Activated B cell treated with CpG ODN at 0.5 μM for 24 hours (primary cell): ENCODE measurements at regions of chr6 and their contacts with region 1.

Region 1: DNA sequence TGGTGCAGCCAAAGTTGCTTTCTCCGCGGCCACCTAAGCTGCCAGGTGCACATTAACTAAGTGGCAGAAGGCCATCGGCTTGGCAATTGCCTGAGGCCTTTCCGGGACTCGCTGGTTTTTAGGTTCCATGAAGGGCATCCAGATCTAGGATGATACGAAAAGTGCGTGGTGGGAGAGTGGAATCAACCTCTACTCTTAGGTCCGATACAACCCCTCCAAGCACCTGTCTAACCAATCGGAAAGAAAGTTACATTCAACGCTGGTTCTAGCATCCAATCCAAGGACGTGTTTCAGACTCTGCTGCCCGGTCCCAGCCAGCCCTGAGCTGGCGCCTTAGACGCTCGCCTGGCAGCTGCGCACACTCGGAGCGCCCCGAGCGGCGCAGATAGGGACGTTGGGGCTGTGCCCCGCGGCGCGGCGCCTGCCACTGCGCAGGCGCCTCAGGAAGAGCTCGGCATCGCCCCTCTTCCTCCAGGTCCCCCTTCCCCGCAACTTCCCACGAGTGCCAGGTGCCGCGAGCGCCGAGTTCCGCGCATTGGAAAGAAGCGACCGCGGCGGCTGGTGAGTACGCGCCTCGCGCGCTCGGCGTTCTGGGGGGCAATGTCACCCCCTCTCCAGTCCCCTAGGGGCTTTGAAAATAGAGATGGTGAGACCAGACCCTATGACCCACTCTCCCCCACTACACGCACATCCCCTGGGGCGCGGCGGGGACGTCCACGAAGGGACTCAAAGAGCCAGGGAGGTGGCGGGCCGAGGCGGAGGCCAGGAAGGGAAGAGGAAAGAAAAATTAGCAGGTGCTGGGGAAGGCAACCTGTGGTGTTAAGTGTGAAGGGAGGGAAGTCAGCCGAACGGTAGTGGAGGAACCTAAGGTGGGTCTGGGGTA is at the start of gene ENPP4:
- DNase-seq: peak; percentile 76
- ATAC-seq: peak; percentile 99
- H3K4me3 Mint-ChIP-seq: peak within 1 kb of the TSS; percentile 95
- H3K27ac Mint-ChIP-seq: peak within 1 kb of the TSS; percentile 87
- H3K4me1 Mint-ChIP-seq: peaks cover 48% of the 10 kb centered on the region
- H3K27me3 Mint-ChIP-seq: no peaks in the 10 kb centered on the region
- CTCF ChIP-seq: no peak
- total RNA-seq, gene ENPP4: 13.0 and 13.6 TPM in 2 replicates

Region 2: DNA sequence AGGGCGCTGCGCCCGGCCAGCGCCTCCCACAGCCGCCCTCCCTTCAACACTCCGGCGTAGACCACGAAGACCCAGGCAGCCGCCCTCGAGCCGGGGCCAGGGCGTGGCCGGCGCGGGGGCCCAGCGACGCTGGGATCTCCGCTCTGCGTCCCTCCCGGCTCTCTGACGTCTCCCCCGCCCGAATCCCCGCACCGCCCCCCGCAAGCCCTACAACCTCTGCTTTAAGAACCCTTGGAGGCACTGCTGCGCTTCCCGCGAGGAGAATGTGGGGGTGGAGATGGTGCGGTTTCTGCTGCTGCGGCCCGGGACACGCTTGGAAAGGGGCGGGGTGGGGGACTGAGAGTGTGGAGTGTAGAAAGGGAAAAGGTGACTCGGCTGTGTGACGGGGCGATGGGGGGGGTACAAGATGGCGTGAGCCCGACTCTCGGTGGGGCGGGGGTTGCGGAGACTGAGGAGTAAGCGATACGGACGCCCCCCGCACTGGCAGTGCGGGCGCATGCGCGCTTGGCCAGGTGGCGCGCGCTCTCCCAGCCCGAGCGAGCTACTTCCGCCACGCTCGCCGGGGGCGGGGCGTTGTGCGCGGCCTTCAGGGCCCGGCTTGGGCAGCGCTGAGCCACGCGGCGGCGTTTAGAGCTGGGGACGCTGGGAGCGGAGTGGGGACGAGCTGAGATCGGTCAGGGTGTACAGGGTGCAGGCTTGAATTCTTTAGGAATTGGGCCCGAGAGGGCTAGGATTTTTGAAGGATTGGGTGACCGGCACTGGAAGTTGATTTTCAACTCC is 752.1 kb before region 1 on chr6 and contains the start of gene SUPT3H:
- CTCF ChIA-PET with region 1: no interaction called
- POLR2A ChIA-PET with region 1: interaction called, 7 read pairs
- intact Hi-C with region 1: loop called (anchors 2 kb)
- DNase-seq: peak; percentile 91
- ATAC-seq: peak; percentile 79
- H3K4me3 Mint-ChIP-seq: peak within 1 kb of the TSS; percentile 99
- H3K27ac Mint-ChIP-seq: peak within 1 kb of the TSS; percentile 99
- H3K4me1 Mint-ChIP-seq: peaks cover 26% of the 10 kb centered on the region
- H3K27me3 Mint-ChIP-seq: no peaks in the 10 kb centered on the region
- CTCF ChIP-seq: no peak
- total RNA-seq, gene SUPT3H: 9.9 and 10.4 TPM in 2 replicates

Region 3: DNA sequence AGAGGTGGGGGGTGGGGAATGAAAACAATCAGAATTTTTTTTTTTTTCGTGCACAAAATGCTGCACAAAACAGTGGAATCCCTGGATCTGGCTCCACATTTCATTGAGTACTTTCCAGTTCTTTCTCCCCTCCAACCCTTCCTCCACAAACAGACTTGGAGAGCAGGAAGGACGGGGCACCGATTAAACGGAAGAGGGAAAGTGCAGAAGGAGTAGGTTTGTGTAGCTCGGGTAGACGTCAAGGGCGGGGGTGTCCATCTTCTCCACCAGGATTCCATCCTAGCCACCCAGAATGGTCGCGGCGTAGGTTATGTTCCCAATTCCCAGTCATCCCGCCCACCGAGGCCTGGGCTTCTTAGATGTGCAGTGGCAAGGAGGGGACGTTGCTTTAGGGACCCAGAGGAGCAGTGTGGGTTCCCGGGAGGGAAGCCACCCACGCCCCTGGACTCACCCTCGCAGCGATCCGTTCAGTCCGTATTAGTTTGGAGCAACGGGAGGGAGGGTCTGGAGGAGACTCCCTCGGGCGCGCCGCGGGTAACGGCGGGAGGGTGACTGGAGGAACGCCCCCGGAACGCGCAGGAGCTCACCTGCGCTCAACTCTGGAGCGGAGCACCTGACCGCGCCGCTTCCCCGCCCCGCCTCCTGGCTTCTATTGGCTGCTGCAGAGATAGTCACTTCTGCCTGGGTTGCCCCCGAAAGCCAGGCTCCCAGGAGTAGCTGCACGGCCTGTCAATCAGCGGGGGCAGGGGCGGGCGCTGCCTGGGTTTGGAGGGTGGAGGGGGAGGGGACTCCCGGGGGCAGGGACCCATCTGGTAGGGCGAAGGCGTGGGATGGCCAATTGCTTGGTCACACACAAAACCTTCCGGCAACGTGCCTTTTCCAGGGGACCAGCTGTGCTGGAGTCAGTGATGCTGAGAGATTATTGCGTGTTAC is 40.8 kb after region 1 on chr6 and contains the start of gene ENPP5:
- CTCF ChIA-PET with region 1: interaction called, 3 read pairs
- POLR2A ChIA-PET with region 1: interaction called, 3 read pairs
- intact Hi-C with region 1: loop called (anchors 2 kb)
- DNase-seq: peak; percentile 58
- ATAC-seq: peak; percentile 98
- H3K4me3 Mint-ChIP-seq: peak within 1 kb of the TSS; percentile 81
- H3K27ac Mint-ChIP-seq: no peak within 1 kb of the TSS
- H3K4me1 Mint-ChIP-seq: peaks cover 10% of the 10 kb centered on the region
- H3K27me3 Mint-ChIP-seq: peaks cover 2% of the 10 kb centered on the region
- CTCF ChIP-seq: no peak
- total RNA-seq, gene ENPP5: 0.44 and 0.71 TPM in 2 replicates

Region 4: GRCh38 chr6:46376562-46377061 is 246.7 kb after region 1 on chr6:
- CTCF ChIA-PET with region 1: no interaction called
- POLR2A ChIA-PET with region 1: interaction called, 3 read pairs
- intact Hi-C with region 1: loop called (anchors 2 kb)
- DNase-seq: peak; percentile 17
- ATAC-seq: peak; percentile 89
- H3K4me3 Mint-ChIP-seq: peak overlapping the region; percentile 69
- H3K27ac Mint-ChIP-seq: peak overlapping the region; percentile 86
- H3K4me1 Mint-ChIP-seq: peaks cover 77% of the 10 kb centered on the region
- H3K27me3 Mint-ChIP-seq: no peaks in the 10 kb centered on the region
- CTCF ChIP-seq: no peak

Region 5: GRCh38 chr6:46410334-46410953 is 280.6 kb after region 1 on chr6:
- CTCF ChIA-PET with region 1: interaction called, 12 read pairs
- POLR2A ChIA-PET with region 1: interaction called, 3 read pairs
- intact Hi-C with region 1: no loop called
- DNase-seq: no peak
- ATAC-seq: peak; percentile 47
- H3K4me3 Mint-ChIP-seq: no peak overlapping the region
- H3K27ac Mint-ChIP-seq: no peak overlapping the region
- H3K4me1 Mint-ChIP-seq: no peaks in the 10 kb centered on the region
- H3K27me3 Mint-ChIP-seq: no peaks in the 10 kb centered on the region
- CTCF ChIP-seq: peak; percentile 44

Region 6: DNA sequence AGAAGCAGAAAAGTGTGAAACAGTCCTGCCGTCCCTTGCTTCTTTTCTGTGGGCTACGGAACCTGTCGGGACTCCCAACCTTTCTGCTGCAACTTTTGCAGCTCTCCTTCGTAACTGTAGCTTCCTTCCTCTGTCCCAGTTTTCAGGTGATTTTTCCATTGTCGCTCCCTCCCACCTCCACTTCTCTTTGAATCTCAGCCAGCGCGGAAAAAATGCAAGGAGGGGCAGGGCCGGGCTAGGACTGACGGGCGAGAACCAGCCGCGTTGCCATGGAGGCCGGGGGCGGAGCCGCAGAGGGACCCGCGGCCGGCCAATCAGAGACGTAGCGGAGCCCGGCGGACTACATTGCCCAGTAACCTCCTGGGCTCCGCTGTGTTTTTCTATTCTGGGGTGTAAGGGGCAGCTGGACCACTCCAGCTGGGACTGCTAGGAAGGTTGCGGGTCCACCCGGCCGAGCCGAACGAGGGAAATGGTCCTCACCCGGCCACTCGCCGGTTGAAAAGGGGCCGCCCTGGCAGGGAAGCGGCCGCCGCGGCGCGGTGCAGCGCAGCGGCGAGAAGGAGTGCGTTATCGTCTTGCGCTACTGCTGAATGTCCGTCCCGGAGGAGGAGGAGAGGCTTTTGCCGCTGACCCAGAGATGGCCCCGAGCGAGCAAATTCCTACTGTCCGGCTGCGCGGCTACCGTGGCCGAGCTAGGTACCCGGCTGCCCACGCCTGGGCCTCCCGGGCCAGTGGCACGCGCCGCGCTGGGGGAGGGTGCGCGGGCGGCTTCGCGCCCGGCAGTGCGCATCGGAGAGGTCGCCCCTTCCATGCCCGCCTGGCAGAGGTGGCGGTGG is 523.0 kb after region 1 on chr6 and contains the starts of genes CYP39A1 and SLC25A27:
- CTCF ChIA-PET with region 1: no interaction called
- POLR2A ChIA-PET with region 1: no interaction called
- intact Hi-C with region 1: loop called (anchors 5 kb)
- DNase-seq: peak; percentile 79
- ATAC-seq: peak; percentile 99
- H3K4me3 Mint-ChIP-seq: peak within 1 kb of the TSS; percentile 86
- H3K27ac Mint-ChIP-seq: peak within 1 kb of the TSS; percentile 27
- H3K4me1 Mint-ChIP-seq: peaks cover 13% of the 10 kb centered on the region
- H3K27me3 Mint-ChIP-seq: peaks cover 41% of the 10 kb centered on the region
- CTCF ChIP-seq: no peak
- total RNA-seq, gene CYP39A1: not detected in 2 replicates
- total RNA-seq, gene SLC25A27: 0.29 and 0.78 TPM in 2 replicates

Region 7: DNA sequence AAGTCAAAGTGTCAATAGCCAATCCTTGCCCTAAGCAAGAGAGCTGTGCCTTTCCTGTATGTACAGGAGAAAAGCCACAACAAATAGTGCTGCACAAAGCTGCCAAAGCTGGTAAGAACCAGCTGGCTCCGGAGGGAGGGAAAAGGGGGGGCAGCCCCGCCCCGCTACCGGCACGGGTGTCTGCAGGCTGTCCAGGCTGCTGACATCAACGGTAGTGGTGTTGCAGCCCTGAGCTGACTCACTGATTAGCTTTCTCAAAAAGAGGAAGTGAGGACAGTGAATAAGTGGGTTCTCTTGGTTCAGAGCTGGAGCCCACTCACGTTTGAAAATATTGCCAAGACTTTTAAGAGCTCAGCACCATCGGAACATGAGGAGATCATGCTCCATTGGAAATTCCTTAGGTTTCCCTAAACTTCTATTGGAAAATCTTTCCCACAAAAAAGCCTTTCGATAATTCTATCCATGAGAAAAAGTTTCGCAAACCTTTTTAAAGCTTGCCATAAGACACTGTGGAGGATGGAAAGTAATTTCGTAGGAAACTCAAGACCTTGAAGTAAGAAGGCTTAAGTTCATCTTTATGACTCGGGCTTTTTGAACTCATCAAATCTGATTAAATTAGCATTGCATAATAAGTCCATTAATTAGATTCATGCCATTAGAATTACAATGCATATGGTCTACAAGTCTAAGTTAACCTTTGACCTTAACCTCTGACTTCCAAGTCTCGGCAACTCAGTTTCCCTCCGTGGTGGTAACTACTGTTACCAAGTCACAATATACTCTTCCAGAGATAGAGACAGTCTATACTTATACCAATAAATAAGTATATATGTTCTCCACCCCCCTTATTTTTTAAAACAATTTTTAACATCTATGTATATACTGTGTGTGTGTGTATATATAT is 1112.9 kb after region 1 on chr6:
- CTCF ChIA-PET with region 1: no interaction called
- POLR2A ChIA-PET with region 1: no interaction called
- intact Hi-C with region 1: loop called (anchors 2 kb)
- DNase-seq: peak; percentile 65
- ATAC-seq: peak; percentile 99
- H3K4me3 Mint-ChIP-seq: peak overlapping the region; percentile 59
- H3K27ac Mint-ChIP-seq: peak overlapping the region; percentile 83
- H3K4me1 Mint-ChIP-seq: peaks cover 36% of the 10 kb centered on the region
- H3K27me3 Mint-ChIP-seq: no peaks in the 10 kb centered on the region
- CTCF ChIP-seq: no peak